Panc1 (cell line): ENCODE measurements at regions of chr18 and their contacts with region 1.

Region 1: GRCh38 chr18:32389858-32390257 is 80.8 kb downstream of the GAREM1 start:
- DNase-seq: no peak
- ATAC-seq: no peak
- H3K4me3 ChIP-seq: no peak overlapping the region
- H3K27ac ChIP-seq: no peak overlapping the region
- H3K4me1 ChIP-seq: no peaks in the 10 kb centered on the region
- H3K27me3 ChIP-seq: no peaks in the 10 kb centered on the region
- CTCF ChIP-seq: no peak

Region 2: DNA sequence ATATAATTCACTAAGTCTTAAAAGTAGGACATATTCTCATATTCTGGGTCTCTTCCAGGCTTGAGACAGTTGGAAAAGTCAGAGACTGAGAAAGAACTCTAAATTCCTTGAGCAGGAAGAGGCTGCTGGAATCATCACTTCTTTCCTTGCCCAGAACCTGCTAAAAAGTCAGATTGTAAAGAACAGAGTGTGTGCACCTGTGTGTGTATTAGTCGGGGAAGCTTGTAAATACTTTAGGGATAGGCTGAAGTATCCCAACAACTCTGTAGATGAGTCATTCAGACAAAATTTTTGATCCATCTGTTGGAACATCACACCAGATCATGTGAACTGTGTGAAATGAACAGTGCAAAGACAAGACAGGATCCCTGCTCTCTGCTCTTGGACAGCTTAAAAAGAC is 64.7 kb after region 1 on chr18:
- CTCF ChIA-PET with region 1: no interaction called
- POLR2A ChIA-PET with region 1: no interaction called
- in situ Hi-C with region 1: no loop called
- intact Hi-C with region 1: loop called (anchors 10 kb)
- DNase-seq: no peak
- ATAC-seq: no peak
- H3K4me3 ChIP-seq: no peak overlapping the region
- H3K27ac ChIP-seq: no peak overlapping the region
- H3K4me1 ChIP-seq: no peaks in the 10 kb centered on the region
- H3K27me3 ChIP-seq: no peaks in the 10 kb centered on the region
- CTCF ChIP-seq: no peak

Region 3: DNA sequence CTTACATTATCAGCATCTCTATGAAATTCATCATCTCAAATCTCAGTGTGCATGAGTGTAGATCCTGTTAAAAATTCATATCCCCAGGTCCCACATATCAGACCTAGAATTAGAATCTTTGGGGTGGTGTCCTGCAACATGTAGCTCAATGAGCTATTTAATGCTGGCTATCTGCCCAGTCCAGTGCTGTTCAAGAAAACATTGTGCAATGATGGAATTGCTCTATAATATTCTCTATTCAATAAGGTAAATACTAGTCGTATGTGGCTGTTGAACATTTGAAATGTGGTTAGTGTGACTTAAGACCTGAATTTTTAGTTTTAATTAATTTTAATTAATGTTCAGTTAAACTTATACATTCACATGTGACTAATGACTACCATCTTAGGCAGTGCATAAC is 1707.5 kb after region 1 on chr18:
- CTCF ChIA-PET with region 1: no interaction called
- POLR2A ChIA-PET with region 1: no interaction called
- in situ Hi-C with region 1: no loop called
- intact Hi-C with region 1: loop called (anchors 5 kb)
- DNase-seq: no peak
- ATAC-seq: no peak
- H3K4me3 ChIP-seq: no peak overlapping the region
- H3K27ac ChIP-seq: no peak overlapping the region
- H3K4me1 ChIP-seq: no peaks in the 10 kb centered on the region
- H3K27me3 ChIP-seq: no peaks in the 10 kb centered on the region
- CTCF ChIP-seq: no peak